Mammary epithelial cell (primary cell): ENCODE measurements at regions of chr17 and their contacts with region 1.

Region 1: GRCh38 chr17:4789901-4790704 is 1.3 kb downstream of the GLTPD2 start:
- DNase-seq: peak; percentile 96
- H3K4me3 ChIP-seq: peak overlapping the region; percentile 63 to 80 (median 71)
- H3K27ac ChIP-seq: peak overlapping the region; percentile 69
- H3K4me1 ChIP-seq: peaks cover 26% of the 10 kb centered on the region
- H3K27me3 ChIP-seq: no peaks in the 10 kb centered on the region
- CTCF ChIP-seq: peak; percentile 45 to 72

Region 2: GRCh38 chr17:4709794-4710692 is 80.1 kb before region 1 on chr17 and contains the start of gene ARRB2:
- CTCF ChIA-PET with region 1: no interaction called
- dilution Hi-C with region 1: no loop called
- in situ Hi-C with region 1: no loop called
- intact Hi-C with region 1: loop called (anchors 1 kb)
- DNase-seq: peak; percentile 98
- H3K4me3 ChIP-seq: peak within 1 kb of the TSS; percentile 50 to 63 (median 63)
- H3K27ac ChIP-seq: peak within 1 kb of the TSS; percentile 14
- H3K4me1 ChIP-seq: peaks cover 14% of the 10 kb centered on the region
- H3K27me3 ChIP-seq: no peaks in the 10 kb centered on the region
- CTCF ChIP-seq: peak; percentile 35 to 72
- total RNA-seq, gene ARRB2: 3.5 to 14.4 TPM

Region 3: GRCh38 chr17:4806777-4807604 is 16.9 kb after region 1 on chr17 and contains the start of gene PLD2:
- CTCF ChIA-PET with region 1: interaction called, 3 read pairs
- dilution Hi-C with region 1: no loop called
- in situ Hi-C with region 1: no loop called
- intact Hi-C with region 1: loop called (anchors 2 kb)
- DNase-seq: peak; percentile 79
- H3K4me3 ChIP-seq: peak within 1 kb of the TSS; percentile 75 to 94 (median 83)
- H3K27ac ChIP-seq: peak within 1 kb of the TSS; percentile 22
- H3K4me1 ChIP-seq: peaks cover 15% of the 10 kb centered on the region
- H3K27me3 ChIP-seq: no peaks in the 10 kb centered on the region
- CTCF ChIP-seq: no peak
- total RNA-seq, gene PLD2: 22.2 to 42.9 TPM

Region 4: DNA sequence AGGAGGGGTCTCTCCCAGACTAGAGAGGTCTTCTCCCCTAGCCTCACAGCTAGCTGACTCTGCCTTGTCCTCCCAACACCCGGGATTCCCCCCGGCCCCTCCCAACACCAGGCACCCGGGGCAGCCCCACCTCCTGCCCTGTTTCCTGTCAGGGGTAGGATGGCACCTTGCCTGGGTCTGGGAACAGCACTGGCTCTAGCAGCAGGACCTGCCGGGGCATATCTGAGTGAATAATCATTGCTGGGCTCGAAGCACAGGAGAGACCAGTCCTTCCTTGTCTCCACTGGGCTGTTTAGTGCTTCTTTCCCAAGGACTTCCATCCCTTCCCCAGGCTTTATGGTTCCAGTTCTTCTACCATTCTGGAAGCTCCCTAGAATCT is 68.8 kb after region 1 on chr17:
- CTCF ChIA-PET with region 1: no interaction called
- dilution Hi-C with region 1: no loop called
- in situ Hi-C with region 1: no loop called
- intact Hi-C with region 1: loop called (anchors 2 kb)
- DNase-seq: peak; percentile 93
- H3K4me3 ChIP-seq: peak overlapping the region; percentile 50 to 91 (median 78)
- H3K27ac ChIP-seq: peak overlapping the region; percentile 83
- H3K4me1 ChIP-seq: peaks cover 60% of the 10 kb centered on the region
- H3K27me3 ChIP-seq: no peaks in the 10 kb centered on the region
- CTCF ChIP-seq: no peak

Region 5: GRCh38 chr17:4891411-4892342 is 101.6 kb after region 1 on chr17:
- CTCF ChIA-PET with region 1: no interaction called
- dilution Hi-C with region 1: no loop called
- in situ Hi-C with region 1: loop called in 1 of 2 experiments (anchors 10 kb)
- intact Hi-C with region 1: loop called (anchors 1 kb)
- DNase-seq: no peak
- H3K4me3 ChIP-seq: no peak overlapping the region
- H3K27ac ChIP-seq: no peak overlapping the region
- H3K4me1 ChIP-seq: no peaks in the 10 kb centered on the region
- H3K27me3 ChIP-seq: no peaks in the 10 kb centered on the region
- CTCF ChIP-seq: no peak

Region 6: GRCh38 chr17:5055543-5055942 is 265.4 kb after region 1 on chr17:
- CTCF ChIA-PET with region 1: no interaction called
- dilution Hi-C with region 1: no loop called
- in situ Hi-C with region 1: no loop called
- intact Hi-C with region 1: loop called (anchors 5 kb)
- DNase-seq: no peak
- H3K4me3 ChIP-seq: no peak overlapping the region
- H3K27ac ChIP-seq: no peak overlapping the region
- H3K4me1 ChIP-seq: no peaks in the 10 kb centered on the region
- H3K27me3 ChIP-seq: no peaks in the 10 kb centered on the region
- CTCF ChIP-seq: no peak